Activated CD4-positive, alpha-beta memory T cell treated with anti-CD3 and anti-CD28 coated beads for 36 hours (primary cell): ENCODE measurements at regions of chr13 and their contacts with region 1.

Region 1: GRCh38 chr13:27130979-27131623 is 40.5 kb downstream of the USP12 start:
- DNase-seq: peak; percentile 86
- H3K4me3 Mint-ChIP-seq: peak overlapping the region; percentile 61
- H3K27ac Mint-ChIP-seq: peak overlapping the region; percentile 92
- H3K4me1 Mint-ChIP-seq: peaks cover 90% of the 10 kb centered on the region
- H3K27me3 Mint-ChIP-seq: no peaks in the 10 kb centered on the region

Region 2: GRCh38 chr13:26831336-26831908 is 299.7 kb before region 1 on chr13:
- CTCF ChIA-PET with region 1: no interaction called
- POLR2A ChIA-PET with region 1: no interaction called
- intact Hi-C with region 1: no loop called
- DNase-seq: no peak
- H3K4me3 Mint-ChIP-seq: no peak overlapping the region
- H3K27ac Mint-ChIP-seq: no peak overlapping the region
- H3K4me1 Mint-ChIP-seq: no peaks in the 10 kb centered on the region
- H3K27me3 Mint-ChIP-seq: peaks cover 5% of the 10 kb centered on the region

Region 3: DNA sequence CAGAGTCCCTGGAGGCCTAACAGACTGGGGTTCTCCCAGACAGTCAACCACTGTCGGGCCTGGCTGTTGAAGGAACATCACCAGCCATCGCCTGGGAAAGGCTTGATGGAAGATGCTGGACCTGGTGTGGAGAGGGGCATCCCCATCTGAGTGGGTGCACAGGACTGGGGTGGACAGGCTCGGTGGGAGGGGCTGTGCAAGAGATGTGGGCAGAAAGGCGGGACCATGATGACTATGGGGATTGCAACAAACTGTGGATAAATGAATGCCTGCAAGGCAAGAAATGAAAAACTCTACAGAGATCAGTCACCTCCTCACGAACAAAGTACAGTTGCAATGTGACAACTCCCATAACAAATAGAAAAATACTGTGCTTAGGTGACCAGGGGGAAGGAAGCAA is 198.7 kb before region 1 on chr13:
- CTCF ChIA-PET with region 1: no interaction called
- POLR2A ChIA-PET with region 1: no interaction called
- intact Hi-C with region 1: no loop called
- DNase-seq: no peak
- H3K4me3 Mint-ChIP-seq: no peak overlapping the region
- H3K27ac Mint-ChIP-seq: no peak overlapping the region
- H3K4me1 Mint-ChIP-seq: peaks cover 7% of the 10 kb centered on the region
- H3K27me3 Mint-ChIP-seq: peaks cover under 1% of the 10 kb centered on the region

Region 4: DNA sequence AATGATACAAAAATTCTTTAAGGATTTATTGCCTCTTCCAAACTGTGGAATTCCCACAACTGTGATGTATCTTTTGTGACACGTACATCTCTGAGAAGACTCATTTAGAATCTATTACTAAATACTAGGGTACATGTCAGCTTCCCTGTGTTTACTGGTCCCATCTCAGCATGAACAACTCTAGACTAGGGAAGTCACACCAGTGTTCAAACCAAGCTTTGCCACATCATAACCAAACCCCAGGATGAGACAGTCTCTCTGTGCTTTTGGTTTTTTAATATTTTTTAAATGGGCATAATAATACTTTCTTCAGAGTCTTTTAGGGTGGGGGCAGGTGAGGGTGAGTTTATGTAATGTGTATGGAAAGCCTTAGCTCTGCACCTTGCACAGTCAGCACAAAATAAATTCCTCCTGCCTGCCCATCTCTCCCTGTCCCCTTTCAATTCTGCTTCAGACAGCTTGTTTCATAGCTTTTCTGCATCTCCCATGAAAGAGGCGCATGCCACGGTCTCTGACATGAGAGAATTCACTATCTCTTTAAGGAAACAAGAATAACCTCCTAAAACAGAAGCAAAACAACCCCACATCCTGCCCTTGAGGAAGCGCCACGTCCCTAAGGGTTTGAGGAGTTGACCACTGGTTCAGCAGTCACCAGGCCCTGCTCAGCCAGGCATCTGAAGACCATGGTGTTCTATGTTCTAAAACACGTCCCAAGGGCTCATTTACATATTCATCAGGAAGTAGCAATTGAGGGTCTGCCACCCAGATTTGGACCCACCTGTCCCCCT is 133.9 kb before region 1 on chr13:
- CTCF ChIA-PET with region 1: no interaction called
- POLR2A ChIA-PET with region 1: interaction called, 4 read pairs
- intact Hi-C with region 1: loop called (anchors 1 kb)
- DNase-seq: peak; percentile 48
- H3K4me3 Mint-ChIP-seq: no peak overlapping the region
- H3K27ac Mint-ChIP-seq: peak overlapping the region; percentile 14
- H3K4me1 Mint-ChIP-seq: peaks cover 8% of the 10 kb centered on the region
- H3K27me3 Mint-ChIP-seq: peaks cover 31% of the 10 kb centered on the region

Region 5: DNA sequence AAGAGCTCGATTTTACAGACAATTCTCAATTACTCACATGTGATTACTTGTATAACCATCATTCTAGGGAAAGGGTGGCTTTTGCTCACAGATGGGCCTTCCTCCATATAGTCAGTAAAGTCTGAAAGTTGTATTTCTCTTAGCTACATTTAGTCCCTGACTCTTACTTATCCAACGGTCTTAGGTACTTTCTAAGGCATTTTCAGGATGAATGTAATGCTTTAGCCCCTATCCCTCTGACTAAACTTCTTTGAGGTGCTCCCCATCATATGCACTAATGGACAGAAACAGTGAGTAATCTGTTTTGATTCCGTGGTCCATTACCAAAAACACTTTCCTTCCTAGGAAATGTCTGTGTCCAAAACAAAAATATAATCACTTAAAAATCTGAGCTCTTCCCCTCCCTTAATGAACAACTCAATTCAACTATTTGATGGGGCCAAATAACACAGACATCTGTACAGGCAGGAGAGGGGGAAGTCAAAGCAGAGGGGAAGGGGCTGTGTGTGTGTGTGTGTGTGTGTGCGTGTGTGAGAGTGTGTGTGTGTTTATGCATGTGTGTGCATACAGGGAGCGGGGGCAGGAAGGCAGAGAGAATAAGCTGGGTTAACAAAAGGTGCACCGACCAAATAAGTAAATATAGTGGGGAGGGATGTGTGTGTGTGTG is 44.4 kb before region 1 on chr13:
- CTCF ChIA-PET with region 1: interaction called, 3 read pairs
- POLR2A ChIA-PET with region 1: interaction called, 5 read pairs
- intact Hi-C with region 1: loop called (anchors 2 kb)
- DNase-seq: no peak
- H3K4me3 Mint-ChIP-seq: no peak overlapping the region
- H3K27ac Mint-ChIP-seq: peak overlapping the region; percentile 64
- H3K4me1 Mint-ChIP-seq: peaks cover 16% of the 10 kb centered on the region
- H3K27me3 Mint-ChIP-seq: no peaks in the 10 kb centered on the region

Region 6: GRCh38 chr13:27171827-27172494 is 40.9 kb after region 1 on chr13:
- CTCF ChIA-PET with region 1: interaction called, 6 read pairs
- POLR2A ChIA-PET with region 1: interaction called, 25 read pairs
- intact Hi-C with region 1: loop called (anchors 1 kb)
- DNase-seq: peak; percentile 92
- H3K4me3 Mint-ChIP-seq: peak overlapping the region; percentile 75
- H3K27ac Mint-ChIP-seq: peak overlapping the region; percentile 77
- H3K4me1 Mint-ChIP-seq: peaks cover 54% of the 10 kb centered on the region
- H3K27me3 Mint-ChIP-seq: no peaks in the 10 kb centered on the region

Region 7: GRCh38 chr13:27251166-27252091 is 120.3 kb after region 1 on chr13 and contains the start of gene RPL21:
- CTCF ChIA-PET with region 1: interaction called, 3 read pairs
- POLR2A ChIA-PET with region 1: interaction called, 10 read pairs
- intact Hi-C with region 1: loop called (anchors 1 kb)
- DNase-seq: peak; percentile 92
- H3K4me3 Mint-ChIP-seq: peak within 1 kb of the TSS; percentile 94
- H3K27ac Mint-ChIP-seq: peak within 1 kb of the TSS; percentile 95
- H3K4me1 Mint-ChIP-seq: peaks cover 48% of the 10 kb centered on the region
- H3K27me3 Mint-ChIP-seq: no peaks in the 10 kb centered on the region
- total RNA-seq, gene RPL21: 1,539 to 1,545 TPM

Region 8: DNA sequence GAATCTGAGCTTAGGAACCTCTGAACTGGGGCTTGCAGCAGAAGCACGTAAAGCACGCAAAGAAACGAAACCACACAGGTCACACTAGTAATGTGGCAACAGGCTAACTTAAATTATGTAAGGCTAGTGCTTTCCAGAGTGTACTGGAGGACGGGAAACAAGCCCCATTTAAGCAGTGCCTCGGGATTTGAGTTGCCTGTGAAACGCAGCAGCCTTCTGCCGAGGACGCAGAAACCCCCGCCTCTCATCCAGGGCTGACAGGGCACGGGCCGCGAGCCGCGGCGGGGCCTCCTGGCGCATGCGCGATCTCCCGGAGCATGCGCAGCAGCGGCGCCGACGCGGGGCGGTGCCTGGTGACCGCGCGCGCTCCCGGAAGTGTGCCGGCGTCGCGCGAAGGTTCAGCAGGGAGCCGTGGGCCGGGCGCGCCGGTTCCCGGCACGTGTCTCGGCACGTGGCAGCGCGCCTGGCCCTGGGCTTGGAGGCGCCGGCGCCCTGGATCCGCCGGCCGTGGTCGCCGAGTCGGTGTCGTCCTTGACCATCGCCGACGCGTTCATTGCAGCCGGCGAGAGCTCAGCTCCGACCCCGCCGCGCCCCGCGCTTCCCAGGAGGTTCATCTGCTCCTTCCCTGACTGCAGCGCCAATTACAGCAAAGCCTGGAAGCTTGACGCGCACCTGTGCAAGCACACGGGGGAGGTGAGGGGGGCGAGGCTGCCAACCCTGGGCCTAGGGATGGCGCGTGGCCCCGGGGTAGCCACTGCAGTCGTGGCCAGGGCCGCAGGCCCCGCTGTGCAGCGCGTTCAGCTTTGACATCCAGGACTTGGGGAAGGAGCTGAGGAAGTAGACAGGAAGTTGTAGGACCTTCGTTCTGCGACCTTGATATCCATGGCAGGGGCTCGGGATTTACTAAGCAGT is 293.4 kb after region 1 on chr13 and contains the start of gene GTF3A:
- CTCF ChIA-PET with region 1: no interaction called
- POLR2A ChIA-PET with region 1: no interaction called
- intact Hi-C with region 1: loop called (anchors 5 kb)
- DNase-seq: peak; percentile 91
- H3K4me3 Mint-ChIP-seq: peak within 1 kb of the TSS; percentile 85
- H3K27ac Mint-ChIP-seq: peak within 1 kb of the TSS; percentile 95
- H3K4me1 Mint-ChIP-seq: peaks cover 35% of the 10 kb centered on the region
- H3K27me3 Mint-ChIP-seq: no peaks in the 10 kb centered on the region
- total RNA-seq, gene GTF3A: 217 to 218 TPM

Region 9: DNA sequence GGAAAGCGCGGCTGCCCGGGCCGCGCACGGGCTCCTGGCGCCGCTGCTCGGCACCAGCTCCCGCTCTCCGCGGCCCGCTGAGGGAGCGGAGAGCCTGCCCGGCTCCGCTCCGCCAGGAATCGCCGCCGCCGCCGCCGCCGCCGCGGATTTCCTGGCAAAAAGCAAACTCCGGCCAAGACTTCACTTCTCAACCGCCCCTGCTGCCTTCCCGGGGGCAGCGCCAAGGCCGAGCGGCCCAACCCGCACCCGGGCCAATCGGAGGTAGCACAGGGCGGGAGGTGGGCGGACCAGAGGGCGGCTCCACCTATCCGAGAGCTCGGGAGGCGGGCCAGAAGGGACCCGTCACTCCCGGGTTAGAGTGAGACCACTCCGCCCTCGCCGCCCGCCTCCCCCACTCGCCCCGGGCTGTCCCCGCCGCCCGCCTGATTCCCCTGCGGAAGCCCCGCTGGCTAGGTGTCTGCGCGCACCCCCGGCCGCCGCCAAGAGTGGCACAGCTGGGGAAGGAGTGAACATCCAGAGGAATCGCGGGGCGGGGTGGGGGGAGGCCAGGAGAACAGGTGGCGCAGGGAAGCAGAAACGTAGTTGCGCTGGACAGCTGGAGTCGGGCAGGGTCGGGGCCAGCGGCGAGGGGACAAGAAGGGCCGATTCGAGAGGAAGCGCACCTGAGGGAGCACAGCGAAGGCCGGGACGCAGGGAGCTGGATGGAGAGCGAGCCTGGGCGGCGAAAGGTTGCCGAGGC is 489.4 kb after region 1 on chr13 and contains the start of gene LNX2:
- CTCF ChIA-PET with region 1: no interaction called
- POLR2A ChIA-PET with region 1: no interaction called
- intact Hi-C with region 1: loop called (anchors 5 kb)
- DNase-seq: peak; percentile 98
- H3K4me3 Mint-ChIP-seq: peak within 1 kb of the TSS; percentile 92
- H3K27ac Mint-ChIP-seq: peak within 1 kb of the TSS; percentile 88
- H3K4me1 Mint-ChIP-seq: peaks cover 54% of the 10 kb centered on the region
- H3K27me3 Mint-ChIP-seq: no peaks in the 10 kb centered on the region
- total RNA-seq, gene LNX2: 5.0 to 5.4 TPM